ENCODE measurements at regions of chr10 and their contacts with region 1.

Region 1: GRCh38 chr10:129896136-129896859 is 67.8 kb downstream of the EBF3 start:
- DNase-seq: no peak
- ATAC-seq: no peak

Region 2: DNA sequence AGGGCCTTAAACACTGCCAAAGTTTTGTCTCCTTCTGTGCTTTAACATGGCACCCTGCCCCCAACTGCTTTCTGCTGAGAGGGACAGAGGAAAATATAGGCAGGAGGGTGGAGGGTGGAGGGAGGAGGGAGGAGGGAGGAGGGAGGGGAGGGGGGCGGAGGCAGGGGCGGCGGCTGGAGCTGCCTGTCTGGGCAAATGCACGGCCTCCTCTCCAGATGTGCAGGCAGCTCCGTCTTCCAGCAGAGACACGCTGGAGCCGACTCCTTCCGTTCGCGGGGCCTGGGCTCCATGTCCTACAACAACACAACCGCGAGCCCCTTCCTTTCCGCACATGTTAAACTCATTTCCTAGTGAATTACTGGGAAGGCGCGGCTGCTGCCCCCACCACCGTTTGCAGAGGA is 53.6 kb after region 1 on chr10:
- intact Hi-C with region 1: loop called in 1 of 2 experiments (anchors 10 kb)
- DNase-seq: peak; percentile 73
- ATAC-seq: peak; percentile 61 to 64

Region 3: GRCh38 chr10:129963641-129964501 is 67.6 kb after region 1 on chr10 and contains the start of gene EBF3:
- intact Hi-C with region 1: loop called in 1 of 2 experiments (anchors 5 kb)
- DNase-seq: peak; percentile 89
- ATAC-seq: peak; percentile 84 to 86
- total RNA-seq, gene EBF3: 6.0 to 10.1 TPM